Ovary (tissue), 10 donors: ENCODE measurements at regions of chr19 and their contacts with region 1.

Region 1: DNA sequence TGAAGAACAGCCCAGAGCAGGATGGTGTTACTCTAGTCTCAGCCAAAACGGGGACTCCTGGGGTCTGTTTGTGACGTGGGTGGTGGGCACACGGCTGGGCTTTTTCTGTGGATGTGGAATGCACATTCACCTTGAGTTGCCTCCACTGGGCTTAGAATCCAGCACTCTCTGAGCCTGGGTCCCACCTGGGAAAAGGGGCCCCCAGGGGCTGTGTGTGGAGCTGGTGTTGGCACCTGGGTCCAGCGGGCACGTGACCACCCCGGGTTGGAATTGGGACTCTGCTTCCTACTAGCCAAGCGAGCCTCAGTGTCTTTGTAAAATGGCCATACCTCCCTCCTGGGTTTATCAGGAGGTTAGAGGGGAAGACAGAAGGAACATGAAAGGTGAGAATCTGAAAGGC is 29.2 kb upstream of the F2RL3 start:
- DNase-seq: no peak
- H3K4me3 ChIP-seq: no peak overlapping the region
- H3K27ac ChIP-seq: no peak overlapping the region
- H3K4me1 ChIP-seq: no peaks in the 10 kb centered on the region
- H3K27me3 ChIP-seq: no peaks in the 10 kb centered on the region
- CTCF ChIP-seq: no peak
- EP300 ChIP-seq: no peak
- POLR2A ChIP-seq: no peak

Region 2: DNA sequence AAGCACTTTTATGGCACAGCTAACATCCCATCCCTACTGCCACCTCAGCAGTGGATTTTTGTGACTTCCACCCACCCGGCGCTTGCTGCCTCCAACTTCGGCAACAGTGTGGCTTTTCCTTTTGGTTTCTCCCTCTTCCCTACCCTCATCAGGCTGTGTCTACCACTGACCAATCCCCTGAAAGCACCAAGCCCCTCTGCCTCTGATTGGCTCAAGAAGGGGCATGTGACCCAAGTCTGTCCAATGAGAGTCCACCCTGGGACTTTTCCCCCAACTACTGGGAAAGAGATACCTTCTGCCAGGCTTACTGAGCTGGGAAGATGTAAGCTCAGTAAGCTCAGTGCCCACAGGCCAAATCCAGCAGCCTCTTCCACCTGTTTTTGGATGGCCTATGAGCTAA is 205.5 kb before region 1 on chr19:
- intact Hi-C with region 1: no loop called
- DNase-seq: no peak
- H3K4me3 ChIP-seq: no peak overlapping the region
- H3K27ac ChIP-seq: no peak overlapping the region
- H3K4me1 ChIP-seq: peaks cover 2% of the 10 kb centered on the region
- H3K27me3 ChIP-seq: no peaks in the 10 kb centered on the region
- CTCF ChIP-seq: no peak
- EP300 ChIP-seq: no peak
- POLR2A ChIP-seq: no peak

Region 3: GRCh38 chr19:16820053-16820452 is 39.6 kb before region 1 on chr19:
- intact Hi-C with region 1: loop called in 1 of 4 experiments (anchors 1 kb)
- DNase-seq: no peak
- H3K4me3 ChIP-seq: no peak overlapping the region
- H3K27ac ChIP-seq: no peak overlapping the region
- H3K4me1 ChIP-seq: peaks cover 5% of the 10 kb centered on the region
- H3K27me3 ChIP-seq: no peaks in the 10 kb centered on the region
- CTCF ChIP-seq: no peak
- EP300 ChIP-seq: no peak
- POLR2A ChIP-seq: no peak